ENCODE measurements at regions of chr3 and their contacts with region 1.

Region 1: GRCh38 chr3:138118612-138119422 is 3.4 kb upstream of the DZIP1L start:
- DNase-seq: peak; percentile 84
- H3K4me3 ChIP-seq: no peak overlapping the region
- H3K27ac ChIP-seq: no peak overlapping the region
- H3K4me1 ChIP-seq: peaks cover 0 to 21% (median 14%) of the 10 kb centered on the region in 4 donors
- H3K27me3 ChIP-seq: no peaks in the 10 kb centered on the region
- CTCF ChIP-seq: peak; percentile 35 to 86 (median 54)
- EP300 ChIP-seq: no peak
- POLR2A ChIP-seq: no peak

Region 2: DNA sequence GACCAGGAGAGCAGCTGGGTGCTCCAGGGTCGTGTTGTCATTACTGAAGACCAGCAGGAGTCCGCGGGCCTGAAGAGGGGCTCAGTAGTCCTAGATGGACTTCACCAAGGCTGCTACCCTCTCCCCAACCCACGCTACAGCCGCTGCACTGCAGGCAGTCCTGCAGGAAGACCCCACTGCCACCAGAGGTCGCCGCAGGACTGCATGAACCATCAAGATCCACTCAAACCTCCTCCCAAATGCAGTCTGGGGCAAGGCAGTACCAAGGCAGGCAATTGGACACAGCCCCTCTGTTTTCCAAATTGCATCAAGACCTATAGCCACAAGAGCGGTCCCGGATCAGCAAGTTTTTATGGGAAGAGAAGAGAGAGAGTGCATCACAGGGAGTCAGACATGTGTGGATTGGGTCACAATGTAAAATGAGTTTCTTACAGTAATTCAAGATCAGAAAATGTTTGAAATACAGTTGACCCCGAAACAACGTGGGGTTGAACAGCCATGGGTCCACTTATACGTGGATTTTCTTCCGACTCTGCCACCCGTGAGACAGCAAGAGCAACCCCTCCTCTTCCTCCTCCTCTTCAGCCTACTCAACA is 50.1 kb before region 1 on chr3:
- intact Hi-C with region 1: loop called (anchors 1 kb)
- DNase-seq: peak; percentile 85
- H3K4me3 ChIP-seq: no peak overlapping the region
- H3K27ac ChIP-seq: no peak overlapping the region
- H3K4me1 ChIP-seq: no peaks in the 10 kb centered on the region
- H3K27me3 ChIP-seq: no peaks in the 10 kb centered on the region
- CTCF ChIP-seq: peak; percentile 84 to 98 (median 93)
- EP300 ChIP-seq: no peak
- POLR2A ChIP-seq: no peak

Region 3: DNA sequence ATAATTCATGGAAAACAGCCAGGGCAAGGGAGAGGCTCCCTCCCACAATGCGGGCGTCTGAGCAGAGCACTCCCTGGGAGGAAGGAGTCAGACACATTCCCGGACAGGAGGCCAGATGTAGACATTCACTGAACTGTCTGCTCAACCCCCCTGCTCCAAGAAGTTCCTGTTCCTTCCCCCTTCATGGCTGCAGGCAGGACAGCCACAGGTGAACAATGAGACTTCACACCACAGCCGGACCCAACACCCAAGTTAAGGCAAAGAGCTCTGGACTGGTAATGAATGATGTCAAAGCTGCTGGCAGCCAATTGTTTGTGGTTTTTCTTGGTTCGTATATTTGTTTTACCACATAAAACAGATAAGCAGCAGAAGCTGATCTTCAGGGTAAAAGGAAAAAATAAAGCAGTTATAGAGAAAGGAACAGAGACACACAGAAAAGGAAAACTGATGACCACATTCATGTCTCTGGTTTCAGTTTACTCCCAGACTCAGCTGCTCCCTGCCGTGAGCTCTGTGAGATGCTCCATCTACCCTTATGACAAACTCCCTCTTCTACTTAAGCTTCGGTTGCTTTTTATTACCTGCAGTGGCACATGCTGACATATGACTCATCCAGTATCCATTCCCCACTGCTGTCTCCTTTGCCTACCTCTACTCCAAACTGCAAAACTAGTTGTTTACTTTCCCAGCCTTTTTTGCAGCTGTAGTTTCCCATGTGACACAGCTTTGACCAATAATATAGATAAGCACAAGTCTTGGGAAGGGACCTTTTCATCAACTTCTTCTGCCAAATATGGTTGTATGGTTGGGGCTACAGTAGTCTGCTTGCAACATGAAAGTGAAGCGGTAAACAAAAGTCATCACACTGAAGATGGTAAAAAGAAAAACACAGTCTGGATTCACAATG is 36.5 kb before region 1 on chr3:
- intact Hi-C with region 1: loop called (anchors 5 kb)
- DNase-seq: no peak
- H3K4me3 ChIP-seq: no peak overlapping the region
- H3K27ac ChIP-seq: peak overlapping the region; percentile 6 to 52 (median 42)
- H3K4me1 ChIP-seq: peaks cover 0 to 13% (median 11%) of the 10 kb centered on the region in 4 donors
- H3K27me3 ChIP-seq: no peaks in the 10 kb centered on the region
- CTCF ChIP-seq: no peak
- EP300 ChIP-seq: no peak
- POLR2A ChIP-seq: no peak

Region 4: GRCh38 chr3:138174421-138175122 is 55.8 kb after region 1 on chr3 and contains the start of gene DBR1:
- intact Hi-C with region 1: loop called (anchors 5 kb)
- DNase-seq: peak; percentile 88
- H3K4me3 ChIP-seq: peak within 1 kb of the TSS; percentile 76 to 84 (median 80)
- H3K27ac ChIP-seq: peak within 1 kb of the TSS; percentile 79 to 89 (median 84)
- H3K4me1 ChIP-seq: peaks cover 0 to 28% (median 14%) of the 10 kb centered on the region in 4 donors
- H3K27me3 ChIP-seq: no peaks in the 10 kb centered on the region
- CTCF ChIP-seq: no peak
- EP300 ChIP-seq: no peak
- POLR2A ChIP-seq: peak; percentile 53 to 63
- total RNA-seq, gene DBR1: 9.6 to 15.1 (median 11.1) TPM

Measured in sigmoid colon (tissue), 7 donors.